Left ventricle myocardium inferior (tissue), 1 donor: ENCODE measurements at regions of chr6 and their contacts with region 1.

Region 1: GRCh38 chr6:97240222-97240621 is 42.8 kb downstream of the MMS22L start:
- DNase-seq: no peak
- H3K4me3 ChIP-seq: no peak overlapping the region
- H3K27ac ChIP-seq: no peak overlapping the region
- H3K4me1 ChIP-seq: no peaks in the 10 kb centered on the region
- H3K27me3 ChIP-seq: no peaks in the 10 kb centered on the region
- CTCF ChIP-seq: no peak

Region 2: DNA sequence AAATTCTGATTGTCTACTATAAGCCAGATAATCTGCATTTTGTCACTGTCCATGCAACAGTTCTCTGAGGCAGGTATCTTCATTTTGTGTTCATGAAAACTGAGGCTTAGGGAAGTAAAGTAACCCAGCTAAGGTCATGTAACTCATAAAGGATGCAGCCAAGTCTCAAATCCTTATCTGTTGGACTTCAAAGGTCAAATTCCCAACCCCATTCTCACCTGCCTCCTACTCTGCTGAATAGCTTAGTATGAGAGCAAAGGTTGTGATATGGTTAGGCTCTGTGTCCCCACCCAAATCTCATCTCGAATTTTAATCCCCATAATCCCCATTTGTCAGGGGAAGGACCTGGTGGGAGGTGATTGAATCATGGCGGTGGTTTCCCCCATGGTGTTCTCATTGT is 225.6 kb before region 1 on chr6:
- intact Hi-C with region 1: no loop called
- DNase-seq: no peak
- H3K4me3 ChIP-seq: no peak overlapping the region
- H3K27ac ChIP-seq: no peak overlapping the region
- H3K4me1 ChIP-seq: no peaks in the 10 kb centered on the region
- H3K27me3 ChIP-seq: no peaks in the 10 kb centered on the region
- CTCF ChIP-seq: no peak

Region 3: DNA sequence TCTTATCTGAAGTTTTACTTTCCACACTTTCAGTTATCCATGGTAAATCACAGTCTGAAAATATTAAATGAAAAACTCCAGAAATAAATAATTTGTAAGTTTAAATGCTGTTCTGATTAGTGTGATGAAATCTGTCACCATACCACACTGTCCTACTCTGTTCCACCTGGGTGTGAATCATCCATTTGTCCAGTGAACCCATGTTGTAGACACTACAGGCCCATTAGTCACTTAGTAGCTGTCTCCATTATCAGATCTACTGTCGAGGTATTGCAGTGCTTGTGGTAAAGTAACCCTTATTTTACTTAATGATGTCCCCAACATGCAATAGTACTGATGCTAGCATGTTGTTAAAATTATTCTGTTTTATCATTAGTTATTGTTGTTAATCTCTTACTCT is 72.0 kb after region 1 on chr6:
- intact Hi-C with region 1: loop called (anchors 10 kb)
- DNase-seq: no peak
- H3K4me3 ChIP-seq: no peak overlapping the region
- H3K27ac ChIP-seq: no peak overlapping the region
- H3K4me1 ChIP-seq: no peaks in the 10 kb centered on the region
- H3K27me3 ChIP-seq: no peaks in the 10 kb centered on the region
- CTCF ChIP-seq: no peak

Region 4: GRCh38 chr6:97656236-97656635 is 416.0 kb after region 1 on chr6:
- intact Hi-C with region 1: no loop called
- DNase-seq: no peak
- H3K4me3 ChIP-seq: no peak overlapping the region
- H3K27ac ChIP-seq: no peak overlapping the region
- H3K4me1 ChIP-seq: no peaks in the 10 kb centered on the region
- H3K27me3 ChIP-seq: no peaks in the 10 kb centered on the region
- CTCF ChIP-seq: no peak